Heart left ventricle (tissue), 16 donors: ENCODE measurements at regions of chr9 and their contacts with region 1.

Region 1: GRCh38 chr9:76458903-76459690 is at the start of gene GCNT1:
- DNase-seq: peak; percentile 72 to 93 (median 84)
- ATAC-seq: peak; percentile 88 to 98 (median 94)
- H3K4me3 ChIP-seq: peak within 1 kb of the TSS; percentile 22 to 87 (median 70)
- H3K27ac ChIP-seq: peak within 1 kb of the TSS in 10 of 12 donors; percentile 5 to 84 (median 40)
- H3K4me1 ChIP-seq: peaks cover 0 to 39% (median 0%) of the 10 kb centered on the region in 12 donors
- H3K27me3 ChIP-seq: no peaks in the 10 kb centered on the region
- CTCF ChIP-seq: peak; percentile 24 to 61 (median 44)
- POLR2A ChIP-seq: peak in 1 of 2 donors; percentile 62
- total RNA-seq, gene GCNT1: 0.67 to 18.0 (median 3.4) TPM

Region 2: GRCh38 chr9:76530458-76531110 is 71.5 kb after region 1 on chr9:
- intact Hi-C with region 1: loop called in 1 of 10 experiments (anchors 10 kb)
- DNase-seq: no peak
- ATAC-seq: peak in 1 of 4 donors; percentile 63
- H3K4me3 ChIP-seq: peak overlapping the region in 1 of 12 donors; percentile 14
- H3K27ac ChIP-seq: peak overlapping the region in 4 of 12 donors; percentile 6 to 63 (median 36)
- H3K4me1 ChIP-seq: peaks cover 0 to 28% (median 2%) of the 10 kb centered on the region in 12 donors
- H3K27me3 ChIP-seq: no peaks in the 10 kb centered on the region
- CTCF ChIP-seq: no peak
- POLR2A ChIP-seq: no peak

Region 3: GRCh38 chr9:76571288-76571687 is 112.2 kb after region 1 on chr9:
- intact Hi-C with region 1: loop called in 1 of 10 experiments (anchors 5 kb)
- DNase-seq: no peak
- ATAC-seq: peak in 2 of 4 donors; percentile 46 to 61
- H3K4me3 ChIP-seq: peak overlapping the region in 11 of 12 donors; percentile 22 to 62 (median 54)
- H3K27ac ChIP-seq: peak overlapping the region in 10 of 12 donors; percentile 18 to 86 (median 46)
- H3K4me1 ChIP-seq: peaks cover 0 to 31% (median 0%) of the 10 kb centered on the region in 12 donors
- H3K27me3 ChIP-seq: peaks cover 0 to 19% (median 0%) of the 10 kb centered on the region in 9 donors
- CTCF ChIP-seq: no peak
- POLR2A ChIP-seq: no peak

Region 4: GRCh38 chr9:76646249-76646648 is 187.2 kb after region 1 on chr9:
- intact Hi-C with region 1: loop called in 1 of 10 experiments (anchors 5 kb)
- DNase-seq: no peak
- ATAC-seq: no peak
- H3K4me3 ChIP-seq: no peak overlapping the region
- H3K27ac ChIP-seq: no peak overlapping the region
- H3K4me1 ChIP-seq: peaks cover 0 to 41% (median 1%) of the 10 kb centered on the region in 12 donors
- H3K27me3 ChIP-seq: no peaks in the 10 kb centered on the region
- CTCF ChIP-seq: no peak
- POLR2A ChIP-seq: no peak